ENCODE measurements at regions of chr10 and their contacts with region 1.

Region 1: DNA sequence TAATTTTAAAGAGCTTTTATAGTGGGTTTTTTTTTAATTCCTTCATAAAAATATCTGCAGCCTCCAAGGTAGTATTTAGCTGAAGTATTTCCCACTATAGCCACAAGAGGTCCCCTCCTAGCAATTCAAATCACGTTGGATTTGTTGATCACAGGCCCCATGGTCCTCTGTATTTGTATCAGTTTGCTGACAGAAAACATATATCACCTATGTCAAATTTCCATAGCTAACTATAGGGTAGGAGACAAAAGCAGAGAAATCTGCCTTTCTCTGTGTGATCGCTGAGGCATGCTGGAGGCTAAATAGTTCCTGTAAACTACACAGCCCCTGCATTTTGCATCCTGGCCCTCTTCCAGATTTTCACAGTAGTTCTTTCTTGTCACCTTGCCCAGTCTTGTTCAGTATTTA is 1.7 kb upstream of the CTNNA3 start:
- DNase-seq: no peak
- ATAC-seq: peak; percentile 51

Region 2: GRCh38 chr10:66892871-66893270 is 804.9 kb before region 1 on chr10:
- intact Hi-C with region 1: no loop called
- DNase-seq: no peak
- ATAC-seq: no peak

Region 3: GRCh38 chr10:67666416-67667034 is 31.2 kb before region 1 on chr10:
- intact Hi-C with region 1: loop called (anchors 2 kb)
- DNase-seq: no peak
- ATAC-seq: peak; percentile 45

Region 4: DNA sequence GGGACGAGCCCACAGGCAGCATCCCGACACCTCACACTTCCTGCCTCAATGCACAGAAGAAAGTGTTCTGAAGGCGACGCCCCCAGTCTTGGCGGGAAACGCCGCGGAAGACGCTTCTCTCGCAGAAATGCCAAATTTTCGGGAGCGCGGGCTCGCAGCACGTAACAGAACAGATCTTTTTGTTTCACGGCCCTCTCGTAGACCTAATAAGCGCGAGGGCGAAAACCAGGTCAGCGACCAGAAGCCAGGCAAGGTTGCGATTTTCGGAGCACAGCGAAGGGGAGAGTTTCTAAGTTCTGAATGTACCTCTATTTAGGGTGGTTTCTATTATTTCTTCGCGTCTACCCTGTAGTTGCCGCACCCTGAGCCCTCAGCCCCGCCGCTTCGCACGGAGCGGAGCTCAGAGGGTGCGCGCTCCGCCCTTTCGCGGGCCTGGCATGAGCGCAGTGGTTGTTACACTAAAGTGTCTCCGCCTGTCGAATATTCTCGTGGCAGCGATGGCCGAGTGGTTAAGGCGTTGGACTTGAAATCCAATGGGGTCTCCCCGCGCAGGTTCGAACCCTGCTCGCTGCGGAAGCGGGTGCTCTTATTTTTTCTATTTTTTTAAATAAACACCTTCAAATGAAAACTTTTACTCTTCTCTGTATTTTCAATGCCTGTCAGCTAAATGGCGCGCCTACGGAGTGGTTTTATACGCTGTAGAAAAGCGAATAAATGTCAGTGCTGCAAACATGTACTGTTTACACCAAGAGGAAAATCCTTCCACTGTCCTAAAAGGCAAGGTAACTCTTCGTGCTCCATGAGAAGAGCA is 66.5 kb after region 1 on chr10:
- intact Hi-C with region 1: loop called (anchors 1 kb)
- DNase-seq: peak; percentile 92
- ATAC-seq: peak; percentile 95

Region 5: DNA sequence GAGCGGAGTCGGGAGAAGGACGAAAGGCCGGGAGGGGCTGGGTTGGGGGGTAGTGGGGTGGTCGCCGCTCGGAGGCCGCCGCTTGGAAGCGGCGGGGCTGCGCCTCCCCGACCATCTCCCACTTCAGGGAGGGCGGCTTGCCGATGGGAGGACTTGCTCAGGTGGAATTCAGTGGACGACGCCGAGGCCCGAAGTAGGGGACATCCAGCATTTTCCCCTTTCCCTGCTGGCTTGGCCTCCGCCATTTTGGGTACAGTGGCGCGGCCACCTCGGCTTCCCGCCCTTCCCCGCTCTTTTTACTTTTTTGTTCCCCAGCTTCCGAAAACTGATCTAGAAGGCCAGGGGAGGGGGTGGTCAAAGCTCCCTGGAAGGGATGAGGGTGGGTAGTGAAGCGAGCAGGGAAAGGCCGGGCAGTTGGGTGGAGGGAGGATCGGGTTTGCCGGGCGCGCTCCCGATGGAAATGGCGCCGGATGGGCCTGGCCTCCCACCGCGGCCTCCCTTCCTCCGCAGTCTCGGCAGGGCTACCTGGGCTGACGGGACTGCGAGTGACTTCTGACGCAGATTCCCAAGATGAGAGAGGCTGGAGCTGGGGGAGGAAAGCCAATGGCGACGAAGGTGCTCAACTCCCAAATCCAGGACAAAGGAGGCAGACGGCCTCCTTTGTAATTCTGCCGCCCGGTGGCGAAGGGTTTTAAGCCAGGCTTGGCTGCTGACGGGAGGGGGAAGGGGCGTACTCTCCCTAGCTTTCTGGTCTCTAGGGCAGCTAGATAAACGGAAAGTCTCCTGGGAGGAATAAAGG is 634.7 kb after region 1 on chr10 and contains the start of gene PBLD:
- intact Hi-C with region 1: no loop called
- DNase-seq: peak; percentile 80
- ATAC-seq: peak; percentile 43
- total RNA-seq, gene PBLD: 2.9 TPM